Dorsolateral prefrontal cortex (tissue), 120 donors: ENCODE measurements at regions of chr18 and their contacts with region 1.

Region 1: DNA sequence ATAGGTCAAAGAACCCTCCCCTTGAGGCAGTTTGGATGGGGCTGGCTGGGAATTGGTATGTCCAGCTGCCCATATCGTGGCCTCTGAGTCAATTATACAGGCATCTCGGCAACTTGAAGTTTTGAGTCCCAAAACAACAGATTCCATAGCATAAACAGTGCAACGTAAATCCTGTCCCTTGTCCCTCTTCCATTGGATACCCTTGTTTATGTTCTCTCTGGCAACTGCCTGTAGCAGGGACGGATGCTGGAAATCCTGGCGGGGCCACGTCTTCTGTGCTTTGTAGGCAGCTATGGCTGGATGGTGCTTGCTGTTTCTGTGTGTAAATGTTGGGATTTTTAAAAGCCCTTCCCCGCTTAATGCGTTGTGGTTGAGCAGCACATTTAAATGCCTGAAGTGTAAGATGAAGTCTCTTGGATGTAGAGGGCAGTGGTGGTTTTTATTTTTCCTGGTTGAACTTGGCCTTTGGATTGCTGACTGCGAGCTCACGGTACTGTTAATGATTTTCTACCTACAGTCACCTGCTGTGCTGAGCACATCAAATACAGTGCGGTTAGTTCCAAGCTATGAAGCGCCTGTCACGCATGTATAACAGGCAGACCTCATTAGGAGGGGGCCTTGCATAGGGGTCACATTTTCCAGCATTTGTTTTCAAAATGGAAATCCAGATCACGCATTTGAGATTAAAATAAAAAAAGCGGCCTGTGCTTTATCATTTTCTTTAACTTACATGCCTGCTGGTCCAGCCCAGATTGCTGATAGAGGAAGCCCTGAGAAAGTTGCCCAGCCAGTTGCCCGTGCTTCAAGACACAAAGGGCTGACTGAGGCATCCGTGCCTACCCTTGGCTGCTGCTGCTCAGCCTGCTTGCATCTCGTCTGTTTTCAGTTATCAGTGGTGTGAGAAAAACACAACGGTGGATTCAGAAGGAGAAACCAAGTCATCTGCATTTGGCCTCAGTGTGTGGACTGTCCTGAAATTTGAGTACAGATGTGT is 84.7 kb downstream of the NEDD4L start:
- DNase-seq: no peak
- H3K4me3 ChIP-seq: no peak overlapping the region
- H3K27ac ChIP-seq: no peak overlapping the region
- H3K27me3 ChIP-seq: peaks cover 0 to 6% (median 0%) of the 10 kb centered on the region in 45 donors
- CTCF ChIP-seq: no peak

Region 2: DNA sequence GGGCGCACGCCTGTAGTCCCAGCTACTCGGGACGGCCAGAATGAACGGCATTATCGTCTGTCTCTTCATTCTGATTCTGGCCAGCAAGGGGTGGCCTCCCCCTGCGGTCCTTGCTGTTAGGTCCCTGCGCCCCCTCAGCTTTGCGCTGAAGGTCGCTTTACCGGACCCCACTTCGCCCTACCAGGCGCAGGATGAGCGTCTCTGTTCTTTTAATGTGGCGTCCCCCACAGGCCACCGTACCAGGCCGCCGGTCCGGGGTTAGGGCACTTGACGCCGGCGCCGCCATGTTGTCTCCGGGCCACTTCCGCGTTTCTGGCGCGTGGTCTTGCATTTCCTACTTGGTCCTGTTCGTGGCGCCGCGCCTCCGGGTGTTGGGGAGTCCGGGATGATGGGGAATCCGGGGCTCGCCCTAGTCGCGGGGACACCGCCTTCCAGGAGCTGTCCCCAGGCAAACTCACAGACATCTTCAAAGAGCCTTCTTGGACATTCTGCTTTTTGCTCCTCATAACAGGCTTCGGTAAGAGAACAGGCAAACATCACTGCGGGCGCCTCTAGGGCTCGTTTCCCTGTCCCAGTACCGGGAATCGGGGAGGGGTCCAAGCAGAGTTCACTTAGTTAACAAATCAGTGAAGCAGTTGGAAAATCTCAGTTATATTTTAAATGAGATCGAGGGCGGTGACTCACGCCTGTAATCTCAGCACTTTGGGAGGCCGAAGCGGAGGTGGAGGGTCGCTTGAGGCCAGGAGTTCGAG is 498.5 kb before region 1 on chr18:
- intact Hi-C with region 1: loop called (anchors 10 kb)
- DNase-seq: peak; percentile 95 to 98 (median 96)
- H3K4me3 ChIP-seq: peak overlapping the region; percentile 48 to 98 (median 79)
- H3K27ac ChIP-seq: peak overlapping the region; percentile 14 to 97 (median 86)
- H3K27me3 ChIP-seq: no peaks in the 10 kb centered on the region
- CTCF ChIP-seq: peak; percentile 38 to 90 (median 81)